ENCODE measurements at regions of chr17 and their contacts with region 1.

Region 1: DNA sequence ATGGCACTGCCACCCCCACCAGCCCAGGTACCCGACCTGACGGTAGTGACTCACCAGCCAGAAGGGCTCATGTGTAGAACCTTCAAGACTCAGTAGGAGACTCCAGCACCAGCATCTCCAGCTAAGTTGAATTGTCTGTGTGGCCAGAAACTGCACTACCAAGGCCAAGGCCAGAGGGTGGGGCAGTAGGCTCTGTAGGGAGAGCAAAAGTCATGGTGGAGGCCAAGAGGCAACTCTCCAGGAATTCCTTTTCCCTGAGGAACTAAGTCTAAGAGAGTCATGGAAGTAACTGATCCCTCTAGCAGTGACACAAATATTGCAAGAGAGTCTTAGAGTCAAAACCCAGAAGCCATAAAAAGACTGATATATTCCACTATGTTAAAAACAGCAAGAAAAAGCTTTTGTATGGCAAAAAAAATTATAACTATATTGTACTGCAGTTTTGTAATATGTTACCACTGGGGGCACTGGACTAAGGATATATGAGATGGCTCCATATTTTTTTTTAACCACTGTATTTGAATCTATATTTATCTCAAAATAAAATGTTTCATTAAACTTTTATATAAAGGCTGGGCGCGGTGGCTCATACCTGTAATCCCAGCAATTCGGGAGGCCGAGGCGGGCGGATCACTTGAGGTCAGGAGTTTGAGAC is 30.2 kb upstream of the GUCY2D start:
- DNase-seq: no peak
- H3K4me3 ChIP-seq: no peak overlapping the region
- H3K27ac ChIP-seq: no peak overlapping the region
- H3K4me1 ChIP-seq: no peaks in the 10 kb centered on the region
- H3K27me3 ChIP-seq: no peaks in the 10 kb centered on the region
- CTCF ChIP-seq: no peak
- EP300 ChIP-seq: no peak
- POLR2A ChIP-seq: no peak
- RAD21 ChIP-seq: no peak

Region 2: GRCh38 chr17:7959503-7960253 is 12.6 kb before region 1 on chr17:
- CTCF ChIA-PET with region 1: interaction called, 14 read pairs
- POLR2A ChIA-PET with region 1: interaction called, 3 read pairs
- DNase-seq: no peak
- H3K4me3 ChIP-seq: no peak overlapping the region
- H3K27ac ChIP-seq: no peak overlapping the region
- H3K4me1 ChIP-seq: no peaks in the 10 kb centered on the region
- H3K27me3 ChIP-seq: no peaks in the 10 kb centered on the region; a peak in 3 of 7 replicates
- CTCF ChIP-seq: no peak
- EP300 ChIP-seq: no peak
- POLR2A ChIP-seq: no peak
- RAD21 ChIP-seq: no peak

Measured in H1 (cell line).